ENCODE measurements at regions of chr14 and their contacts with region 1.

Region 1: GRCh38 chr14:61025251-61026223 is 44.5 kb downstream of the SLC38A6 start:
- DNase-seq: peak; percentile 31
- H3K4me3 Mint-ChIP-seq: no peak overlapping the region
- H3K27ac Mint-ChIP-seq: no peak overlapping the region
- H3K4me1 Mint-ChIP-seq: peaks cover 5% of the 10 kb centered on the region
- H3K27me3 Mint-ChIP-seq: no peaks in the 10 kb centered on the region

Region 2: GRCh38 chr14:60514741-60515491 is 510.6 kb before region 1 on chr14:
- intact Hi-C with region 1: loop called (anchors 10 kb)
- DNase-seq: no peak
- H3K4me3 Mint-ChIP-seq: peak overlapping the region; percentile 13
- H3K27ac Mint-ChIP-seq: no peak overlapping the region
- H3K4me1 Mint-ChIP-seq: peaks cover 8% of the 10 kb centered on the region
- H3K27me3 Mint-ChIP-seq: peaks cover 70% of the 10 kb centered on the region

Region 3: DNA sequence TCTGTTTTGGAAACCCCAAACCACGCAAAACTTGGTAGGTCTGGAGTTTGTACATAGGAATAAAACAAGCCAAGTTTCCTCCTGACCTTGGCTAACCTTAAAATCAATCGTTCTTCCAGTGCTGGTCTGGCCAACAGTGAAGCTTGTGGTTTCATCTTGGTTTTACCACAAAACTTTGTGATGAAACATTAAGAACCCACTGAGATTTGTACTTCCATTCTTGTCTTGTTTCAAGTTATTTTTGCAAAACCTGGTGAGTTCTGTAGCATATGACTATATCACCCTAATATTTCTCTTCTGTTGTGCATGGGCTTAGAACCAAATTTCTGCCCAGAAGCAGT is 402.6 kb before region 1 on chr14:
- intact Hi-C with region 1: loop called (anchors 1 kb)
- DNase-seq: no peak
- H3K4me3 Mint-ChIP-seq: no peak overlapping the region
- H3K27ac Mint-ChIP-seq: no peak overlapping the region
- H3K4me1 Mint-ChIP-seq: peaks cover 6% of the 10 kb centered on the region
- H3K27me3 Mint-ChIP-seq: peaks cover 34% of the 10 kb centered on the region

Region 4: DNA sequence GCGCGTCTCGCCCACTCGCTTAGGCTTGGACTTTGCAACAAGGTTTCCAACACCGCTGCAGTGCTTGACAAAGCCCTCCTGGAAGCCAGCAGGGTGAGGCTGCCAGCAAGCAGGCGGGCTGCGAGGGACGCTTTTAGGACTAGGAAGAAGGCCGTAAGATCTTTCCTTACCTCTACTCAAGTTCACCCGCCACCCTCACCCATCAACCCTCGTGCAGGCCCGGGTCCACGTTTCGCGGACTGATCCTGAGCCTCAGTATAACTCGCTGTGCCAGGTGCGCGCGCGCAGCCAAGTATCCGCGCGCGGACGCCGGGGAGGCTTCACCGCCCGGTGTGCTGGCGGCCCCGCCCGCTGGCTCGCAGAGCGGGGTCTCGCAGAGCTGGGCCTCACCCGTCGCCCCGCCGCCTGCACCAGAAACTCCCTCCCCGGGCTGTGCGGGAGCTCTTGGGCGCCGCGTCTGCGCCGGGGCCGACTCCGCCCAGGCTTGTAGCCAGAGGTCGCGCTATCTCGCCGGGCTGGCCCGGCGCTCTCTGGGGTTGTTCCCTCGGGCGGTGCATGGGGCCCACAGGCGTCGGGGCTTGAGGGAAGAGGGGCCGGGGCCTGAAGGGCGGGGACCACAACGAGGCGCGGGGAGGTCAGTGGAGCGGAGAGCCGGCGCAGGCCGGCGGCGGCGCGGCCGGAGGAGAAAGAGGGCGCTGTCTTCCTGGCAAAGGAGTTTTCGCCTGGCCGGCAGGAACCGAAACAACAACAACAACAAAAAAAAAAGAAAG is 368.7 kb before region 1 on chr14:
- intact Hi-C with region 1: loop called (anchors 1 kb)
- DNase-seq: no peak
- H3K4me3 Mint-ChIP-seq: peak overlapping the region; percentile 79
- H3K27ac Mint-ChIP-seq: no peak overlapping the region
- H3K4me1 Mint-ChIP-seq: peaks cover 28% of the 10 kb centered on the region
- H3K27me3 Mint-ChIP-seq: peaks cover 83% of the 10 kb centered on the region

Region 5: DNA sequence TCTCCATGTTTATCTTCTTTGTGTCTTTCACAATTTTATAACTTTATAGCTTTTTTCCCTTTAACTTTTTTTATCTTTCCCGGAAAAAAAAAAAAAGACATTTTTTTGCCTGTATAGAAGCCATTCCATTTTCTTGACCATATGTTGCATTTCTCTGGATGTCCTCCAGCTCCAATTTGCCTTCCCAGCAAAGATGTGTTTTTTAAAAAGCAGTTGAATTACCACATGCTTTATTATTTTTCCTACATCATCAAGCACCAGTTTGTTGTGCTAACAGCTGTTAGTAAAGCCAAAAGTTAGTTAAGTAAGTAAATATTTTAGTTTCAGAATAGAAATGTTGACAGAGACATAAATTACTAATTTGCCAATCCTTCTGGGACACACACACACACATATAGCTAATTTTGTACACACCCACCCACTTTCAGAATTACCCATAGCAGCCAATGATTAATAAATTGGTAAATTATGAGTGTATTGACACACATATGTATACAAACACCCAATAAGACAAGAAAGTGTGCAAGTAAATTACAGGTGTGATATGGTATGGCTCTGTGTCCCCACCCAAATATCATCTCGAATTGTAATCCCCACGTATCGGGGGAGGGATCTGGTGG is 73.8 kb after region 1 on chr14:
- intact Hi-C with region 1: no loop called
- DNase-seq: no peak
- H3K4me3 Mint-ChIP-seq: no peak overlapping the region
- H3K27ac Mint-ChIP-seq: no peak overlapping the region
- H3K4me1 Mint-ChIP-seq: peaks cover 32% of the 10 kb centered on the region
- H3K27me3 Mint-ChIP-seq: peaks cover 1% of the 10 kb centered on the region